ENCODE measurements at regions of chrX and their contacts with region 1.

Region 1: GRCh38 chrX:13487731-13488523 is 81.5 kb upstream of the EGFL6 start:
- DNase-seq: no peak
- ATAC-seq: peak; percentile 59
- H3K4me3 Mint-ChIP-seq: no peak overlapping the region
- H3K27ac Mint-ChIP-seq: peak overlapping the region; percentile 89
- H3K4me1 Mint-ChIP-seq: peaks cover 21% of the 10 kb centered on the region
- H3K27me3 Mint-ChIP-seq: no peaks in the 10 kb centered on the region
- CTCF ChIP-seq: no peak

Region 2: DNA sequence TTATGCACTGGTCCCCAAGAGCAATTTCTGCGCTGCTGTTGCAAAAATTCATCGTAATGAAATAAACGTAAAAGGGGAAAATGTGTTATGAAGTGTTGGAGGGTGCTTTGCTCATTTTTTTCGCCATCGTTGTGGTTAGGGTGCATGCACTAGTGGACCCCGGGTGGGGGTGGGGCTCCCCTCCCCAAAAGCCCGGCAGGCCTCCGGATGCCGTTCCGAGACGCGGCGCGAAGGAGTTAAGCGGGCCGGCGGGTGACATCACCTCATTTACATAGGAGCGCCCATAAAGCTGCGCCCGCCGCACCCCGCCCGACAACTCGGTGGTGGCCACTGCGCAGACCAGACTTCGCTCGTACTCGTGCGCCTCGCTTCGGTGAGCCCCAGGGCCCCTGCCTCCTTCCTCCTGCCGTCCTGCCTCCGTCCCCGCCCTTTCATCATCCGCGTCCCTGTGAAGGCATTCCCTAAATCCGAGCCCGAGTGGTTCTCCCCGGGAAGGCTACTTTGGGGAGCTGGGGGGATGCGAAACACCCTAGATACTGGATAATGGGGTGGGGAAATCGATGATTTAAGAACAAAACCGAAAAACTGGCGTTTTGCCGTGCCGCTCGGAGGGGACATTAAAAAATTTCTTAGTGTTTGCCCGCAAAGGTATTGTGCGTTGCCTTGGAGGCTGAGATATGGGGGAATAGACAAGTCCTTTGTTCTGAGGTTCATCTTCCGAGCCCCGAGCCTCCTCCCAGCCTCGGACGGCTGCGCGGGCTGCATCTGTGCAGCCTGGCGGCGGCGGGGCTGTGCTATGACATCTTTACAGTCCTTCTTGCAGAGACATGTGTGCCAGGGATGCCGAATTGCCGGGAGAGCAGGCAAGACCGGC is 512.9 kb before region 1 on chrX and contains the start of gene TMSB4X:
- CTCF ChIA-PET with region 1: interaction called, 16 read pairs
- POLR2A ChIA-PET with region 1: interaction called, 30 read pairs
- intact Hi-C with region 1: loop called (anchors 1 kb)
- DNase-seq: peak; percentile 75
- ATAC-seq: peak; percentile 46
- H3K4me3 Mint-ChIP-seq: peak within 1 kb of the TSS; percentile 94
- H3K27ac Mint-ChIP-seq: peak within 1 kb of the TSS; percentile 97
- H3K4me1 Mint-ChIP-seq: peaks cover 58% of the 10 kb centered on the region
- H3K27me3 Mint-ChIP-seq: no peaks in the 10 kb centered on the region
- CTCF ChIP-seq: no peak
- total RNA-seq, gene TMSB4X: 5,922 and 6,273 TPM in 2 replicates

Region 3: DNA sequence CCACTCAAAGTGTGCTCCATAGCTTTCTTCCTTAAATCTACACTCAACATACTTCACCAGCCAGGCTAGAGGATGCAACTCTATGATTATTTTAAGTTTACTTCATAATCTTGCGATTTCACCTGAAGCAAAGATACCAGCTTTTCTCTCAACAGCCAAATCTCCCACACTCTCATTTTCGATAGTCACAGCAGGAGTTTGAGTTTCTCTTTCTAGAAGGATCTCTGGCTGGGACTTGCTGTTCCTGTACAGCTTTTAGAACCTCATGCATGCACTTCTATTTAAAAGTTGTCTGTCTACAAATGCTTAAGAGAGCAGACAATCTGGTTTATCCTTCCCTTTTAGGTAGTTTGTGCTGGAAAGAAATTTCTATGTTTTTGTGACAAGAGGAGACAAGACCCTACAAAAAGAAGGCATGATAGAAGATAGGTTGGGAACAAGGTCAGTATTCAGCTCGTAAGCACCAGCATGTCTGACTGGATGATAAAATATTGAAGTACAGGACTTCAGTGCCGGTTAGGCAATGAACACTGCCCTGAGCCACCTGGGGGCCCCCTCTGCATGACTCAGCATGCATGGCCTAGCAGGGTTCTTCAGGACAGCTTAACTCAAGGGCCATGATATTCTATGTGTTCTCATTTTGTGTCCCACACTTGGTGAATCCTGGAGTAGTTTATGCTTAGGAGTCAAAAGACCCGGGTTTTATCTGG is 233.7 kb before region 1 on chrX:
- CTCF ChIA-PET with region 1: interaction called, 26 read pairs
- POLR2A ChIA-PET with region 1: interaction called, 8 read pairs
- intact Hi-C with region 1: loop called (anchors 1 kb)
- DNase-seq: no peak
- ATAC-seq: no peak
- H3K4me3 Mint-ChIP-seq: peak overlapping the region; percentile 28
- H3K27ac Mint-ChIP-seq: peak overlapping the region; percentile 74
- H3K4me1 Mint-ChIP-seq: peaks cover 72% of the 10 kb centered on the region
- H3K27me3 Mint-ChIP-seq: no peaks in the 10 kb centered on the region
- CTCF ChIP-seq: no peak

Region 4: GRCh38 chrX:13341491-13342101 is 146.3 kb before region 1 on chrX:
- CTCF ChIA-PET with region 1: no interaction called
- POLR2A ChIA-PET with region 1: interaction called, 5 read pairs
- intact Hi-C with region 1: loop called (anchors 2 kb)
- DNase-seq: no peak
- ATAC-seq: no peak
- H3K4me3 Mint-ChIP-seq: no peak overlapping the region
- H3K27ac Mint-ChIP-seq: no peak overlapping the region
- H3K4me1 Mint-ChIP-seq: peaks cover 20% of the 10 kb centered on the region
- H3K27me3 Mint-ChIP-seq: no peaks in the 10 kb centered on the region
- CTCF ChIP-seq: no peak

Region 5: GRCh38 chrX:13376857-13377549 is 110.9 kb before region 1 on chrX:
- CTCF ChIA-PET with region 1: no interaction called
- POLR2A ChIA-PET with region 1: no interaction called
- intact Hi-C with region 1: no loop called
- DNase-seq: no peak
- ATAC-seq: no peak
- H3K4me3 Mint-ChIP-seq: no peak overlapping the region
- H3K27ac Mint-ChIP-seq: no peak overlapping the region
- H3K4me1 Mint-ChIP-seq: peaks cover 18% of the 10 kb centered on the region
- H3K27me3 Mint-ChIP-seq: no peaks in the 10 kb centered on the region
- CTCF ChIP-seq: no peak

Region 6: GRCh38 chrX:13473442-13474163 is 14.3 kb before region 1 on chrX:
- CTCF ChIA-PET with region 1: interaction called, 11 read pairs
- POLR2A ChIA-PET with region 1: interaction called, 3 read pairs
- intact Hi-C with region 1: no loop called
- DNase-seq: no peak
- ATAC-seq: peak; percentile 81
- H3K4me3 Mint-ChIP-seq: peak overlapping the region; percentile 78
- H3K27ac Mint-ChIP-seq: peak overlapping the region; percentile 97
- H3K4me1 Mint-ChIP-seq: peaks cover 61% of the 10 kb centered on the region
- H3K27me3 Mint-ChIP-seq: no peaks in the 10 kb centered on the region
- CTCF ChIP-seq: no peak

Region 7: DNA sequence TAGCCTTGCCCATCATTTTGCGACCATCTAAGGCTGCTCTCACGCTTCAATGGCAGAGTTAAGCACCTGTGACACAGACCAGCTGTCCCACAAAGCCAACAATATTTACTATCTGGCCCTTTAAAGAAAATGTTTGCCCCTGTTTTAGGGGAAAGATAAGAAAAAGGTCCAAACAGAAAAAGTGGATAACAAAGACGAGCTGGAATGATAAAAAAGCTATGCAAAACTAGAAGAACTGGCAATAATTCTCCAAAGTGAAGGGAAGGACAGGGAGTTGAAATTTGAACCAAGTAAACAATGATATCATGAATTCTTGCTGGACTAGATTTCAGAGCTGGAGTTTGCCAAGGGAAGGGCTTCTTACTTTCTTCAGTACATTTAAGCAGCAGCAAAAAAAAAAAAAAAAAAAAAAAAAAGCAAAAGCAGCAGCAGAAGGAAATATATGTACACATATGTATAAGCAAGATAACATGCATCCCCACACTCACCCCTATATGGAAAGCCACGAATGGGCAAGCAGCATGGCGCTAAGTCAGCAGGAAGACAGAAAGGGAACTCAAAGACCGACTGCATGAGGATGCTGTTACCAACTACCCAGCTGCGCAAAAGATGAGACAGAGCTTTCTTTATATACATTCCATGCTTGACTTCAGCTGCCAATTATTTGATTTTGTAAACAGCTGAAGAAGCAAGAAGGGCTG is 234.0 kb after region 1 on chrX:
- CTCF ChIA-PET with region 1: no interaction called
- POLR2A ChIA-PET with region 1: no interaction called
- intact Hi-C with region 1: no loop called
- DNase-seq: no peak
- ATAC-seq: peak; percentile 14
- H3K4me3 Mint-ChIP-seq: no peak overlapping the region
- H3K27ac Mint-ChIP-seq: peak overlapping the region; percentile 41
- H3K4me1 Mint-ChIP-seq: peaks cover 21% of the 10 kb centered on the region
- H3K27me3 Mint-ChIP-seq: no peaks in the 10 kb centered on the region
- CTCF ChIP-seq: no peak